ENCODE measurements at regions of chr21 and their contacts with region 1.

Region 1: DNA sequence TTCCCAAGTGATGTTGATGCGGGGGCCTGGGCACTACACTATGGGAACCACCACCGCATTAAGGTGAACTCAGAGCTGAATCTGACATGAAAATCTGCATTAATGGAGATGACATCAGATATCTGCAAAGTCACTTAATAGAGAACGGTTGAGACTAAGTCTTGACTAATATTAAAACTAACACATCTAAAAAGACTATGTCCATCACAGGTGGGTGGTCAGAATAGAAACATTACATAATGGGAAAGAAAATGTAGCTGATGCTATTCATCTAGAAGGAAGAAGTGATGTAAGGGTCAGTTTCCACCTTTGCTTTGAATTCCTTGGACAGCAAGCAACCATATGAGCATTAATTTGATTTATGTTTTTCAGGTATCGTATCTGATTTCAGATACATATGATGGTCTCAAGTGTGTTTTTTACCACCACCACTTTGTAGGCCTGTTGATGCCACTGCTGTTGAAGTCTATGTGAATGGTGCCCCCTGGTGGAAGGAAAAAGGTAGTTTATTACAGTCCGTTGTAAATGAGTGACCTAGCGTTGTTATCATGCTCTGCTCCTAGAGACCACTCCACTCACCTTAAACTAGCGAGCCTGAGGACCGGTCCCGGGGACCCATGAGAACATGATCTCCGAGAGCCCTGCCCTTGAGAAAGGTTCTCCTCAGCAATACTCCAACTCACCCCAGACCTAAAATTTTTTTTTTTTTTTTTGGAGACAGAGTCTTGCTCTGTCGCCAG is 73.5 kb downstream of the BACH1 start:
- H3K4me3 Mint-ChIP-seq: no peak overlapping the region
- H3K27ac Mint-ChIP-seq: peak overlapping the region; percentile 27
- H3K4me1 Mint-ChIP-seq: peaks cover 15% of the 10 kb centered on the region
- H3K27me3 Mint-ChIP-seq: no peaks in the 10 kb centered on the region

Region 2: DNA sequence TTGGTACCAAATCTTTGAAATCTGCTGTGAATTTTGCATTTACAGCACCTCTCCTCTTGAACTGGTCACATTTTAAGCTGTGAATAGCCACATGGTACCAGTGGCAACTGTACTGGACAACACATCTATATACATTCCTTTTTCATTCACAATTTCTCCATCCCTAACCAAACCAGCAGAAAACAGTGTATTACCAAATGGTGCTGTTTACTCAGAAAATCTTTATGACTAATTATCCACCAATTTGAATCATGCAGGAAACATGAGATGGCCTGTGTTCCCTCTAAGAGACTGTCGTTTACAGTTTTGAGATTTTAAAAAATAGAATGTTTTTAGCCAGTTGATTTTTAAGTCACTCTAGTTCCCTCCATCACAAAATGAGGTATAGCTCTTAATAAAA is 281.2 kb before region 1 on chr21:
- intact Hi-C with region 1: loop called (anchors 1 kb)
- H3K4me3 Mint-ChIP-seq: no peak overlapping the region
- H3K27ac Mint-ChIP-seq: no peak overlapping the region
- H3K4me1 Mint-ChIP-seq: peaks cover 41% of the 10 kb centered on the region
- H3K27me3 Mint-ChIP-seq: no peaks in the 10 kb centered on the region

Region 3: GRCh38 chr21:29164325-29164942 is 207.8 kb before region 1 on chr21:
- intact Hi-C with region 1: loop called (anchors 2 kb)
- H3K4me3 Mint-ChIP-seq: no peak overlapping the region
- H3K27ac Mint-ChIP-seq: peak overlapping the region; percentile 96
- H3K4me1 Mint-ChIP-seq: peaks cover 56% of the 10 kb centered on the region
- H3K27me3 Mint-ChIP-seq: no peaks in the 10 kb centered on the region

Region 4: GRCh38 chr21:29232601-29233546 is 139.4 kb before region 1 on chr21:
- intact Hi-C with region 1: loop called (anchors 5 kb)
- H3K4me3 Mint-ChIP-seq: peak overlapping the region; percentile 15
- H3K27ac Mint-ChIP-seq: peak overlapping the region; percentile 70
- H3K4me1 Mint-ChIP-seq: peaks cover 79% of the 10 kb centered on the region
- H3K27me3 Mint-ChIP-seq: no peaks in the 10 kb centered on the region

Region 5: DNA sequence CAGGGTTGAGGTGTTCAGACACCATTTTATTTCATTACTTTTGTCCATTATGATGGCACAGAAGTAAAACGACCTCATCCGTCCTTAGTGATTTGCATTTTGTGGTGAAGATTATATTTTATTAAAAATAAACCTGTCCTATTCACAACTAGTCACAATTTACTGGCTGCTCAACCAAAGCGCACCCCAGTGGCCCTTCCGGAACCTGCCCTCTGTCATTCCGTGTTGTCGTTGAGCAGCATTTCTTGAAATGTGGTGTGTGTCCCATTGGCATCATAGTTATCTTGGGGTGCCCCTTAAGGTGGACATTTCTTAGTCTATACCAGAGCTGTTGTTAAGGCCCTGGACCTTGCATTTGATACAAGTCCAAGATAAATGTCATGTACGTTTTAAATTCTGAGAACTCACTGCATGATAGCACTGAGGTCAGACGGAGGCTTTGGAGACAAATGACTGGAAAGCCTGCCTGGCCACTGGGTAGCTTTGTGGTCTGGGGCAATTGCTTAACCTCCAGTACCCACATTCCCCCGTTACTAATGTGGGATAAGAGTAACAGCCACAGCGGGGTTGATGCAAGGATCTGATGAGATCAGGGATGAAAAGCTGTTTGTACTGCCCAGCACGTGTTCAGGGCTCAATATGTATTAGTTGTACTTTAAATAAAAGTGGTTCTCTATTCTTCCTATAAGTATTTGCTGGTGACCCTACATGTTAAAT is 37.4 kb before region 1 on chr21:
- intact Hi-C with region 1: loop called (anchors 5 kb)
- H3K4me3 Mint-ChIP-seq: no peak overlapping the region
- H3K27ac Mint-ChIP-seq: peak overlapping the region; percentile 8
- H3K4me1 Mint-ChIP-seq: peaks cover 36% of the 10 kb centered on the region
- H3K27me3 Mint-ChIP-seq: no peaks in the 10 kb centered on the region